Body of pancreas (tissue), 4 donors: ENCODE measurements at regions of chr11 and their contacts with region 1.

Region 1: GRCh38 chr11:45771566-45772448 is 33.1 kb upstream of the SLC35C1 start:
- DNase-seq: peak; percentile 85 to 92 (median 86)
- ATAC-seq: peak; percentile 98
- H3K4me3 ChIP-seq: peak overlapping the region; percentile 20 to 24
- H3K27ac ChIP-seq: peak overlapping the region in 3 of 4 donors; percentile 50 to 60 (median 57)
- H3K4me1 ChIP-seq: peaks cover 8% of the 10 kb centered on the region
- H3K27me3 ChIP-seq: no peaks in the 10 kb centered on the region
- CTCF ChIP-seq: peak; percentile 89 to 96 (median 93)
- POLR2A ChIP-seq: peak in 2 of 3 donors; percentile 30 to 36

Region 2: GRCh38 chr11:45354976-45355705 is 416.7 kb before region 1 on chr11:
- intact Hi-C with region 1: loop called (anchors 10 kb)
- DNase-seq: peak; percentile 88 to 90 (median 88)
- ATAC-seq: peak; percentile 92
- H3K4me3 ChIP-seq: peak overlapping the region; percentile 9 to 57
- H3K27ac ChIP-seq: peak overlapping the region in 3 of 4 donors; percentile 13 to 64 (median 46)
- H3K4me1 ChIP-seq: peaks cover 13% of the 10 kb centered on the region
- H3K27me3 ChIP-seq: no peaks in the 10 kb centered on the region
- CTCF ChIP-seq: no peak
- POLR2A ChIP-seq: peak in 2 of 3 donors; percentile 16 to 17

Region 3: GRCh38 chr11:46259971-46260560 is 488.3 kb after region 1 on chr11:
- intact Hi-C with region 1: no loop called
- DNase-seq: no peak
- ATAC-seq: no peak
- H3K4me3 ChIP-seq: no peak overlapping the region
- H3K27ac ChIP-seq: no peak overlapping the region
- H3K4me1 ChIP-seq: no peaks in the 10 kb centered on the region
- H3K27me3 ChIP-seq: no peaks in the 10 kb centered on the region
- CTCF ChIP-seq: no peak
- POLR2A ChIP-seq: no peak